Ovary (tissue), 10 donors: ENCODE measurements at regions of chr11 and their contacts with region 1.

Region 1: GRCh38 chr11:63871962-63872799 is 33.3 kb downstream of the MARK2 start:
- DNase-seq: peak; percentile 45 to 79 (median 60)
- H3K4me3 ChIP-seq: no peak overlapping the region
- H3K27ac ChIP-seq: peak overlapping the region in 1 of 2 donors; percentile 39
- H3K4me1 ChIP-seq: peaks cover 35% of the 10 kb centered on the region
- H3K27me3 ChIP-seq: no peaks in the 10 kb centered on the region
- CTCF ChIP-seq: peak in 1 of 3 donors; percentile 42
- EP300 ChIP-seq: no peak
- POLR2A ChIP-seq: no peak

Region 2: GRCh38 chr11:63837027-63837688 is 35.0 kb before region 1 on chr11:
- intact Hi-C with region 1: no loop called
- DNase-seq: peak; percentile 71 to 87 (median 81)
- H3K4me3 ChIP-seq: no peak overlapping the region
- H3K27ac ChIP-seq: no peak overlapping the region
- H3K4me1 ChIP-seq: peaks cover 11% of the 10 kb centered on the region
- H3K27me3 ChIP-seq: no peaks in the 10 kb centered on the region
- CTCF ChIP-seq: peak; percentile 65 to 90 (median 89)
- EP300 ChIP-seq: no peak
- POLR2A ChIP-seq: no peak

Region 3: GRCh38 chr11:63906585-63906984 is 34.4 kb after region 1 on chr11:
- intact Hi-C with region 1: loop called in 1 of 4 experiments (anchors 5 kb)
- DNase-seq: no peak
- H3K4me3 ChIP-seq: no peak overlapping the region
- H3K27ac ChIP-seq: no peak overlapping the region
- H3K4me1 ChIP-seq: peaks cover 9% of the 10 kb centered on the region
- H3K27me3 ChIP-seq: no peaks in the 10 kb centered on the region
- CTCF ChIP-seq: no peak
- EP300 ChIP-seq: no peak
- POLR2A ChIP-seq: no peak

Region 4: GRCh38 chr11:64787526-64788320 is 915.5 kb after region 1 on chr11:
- intact Hi-C with region 1: no loop called
- DNase-seq: peak in 4 of 5 donors; percentile 35 to 62 (median 46)
- H3K4me3 ChIP-seq: no peak overlapping the region
- H3K27ac ChIP-seq: no peak overlapping the region
- H3K4me1 ChIP-seq: no peaks in the 10 kb centered on the region
- H3K27me3 ChIP-seq: no peaks in the 10 kb centered on the region
- CTCF ChIP-seq: peak in 2 of 3 donors; percentile 29 to 30
- EP300 ChIP-seq: no peak
- POLR2A ChIP-seq: no peak